Activated CD4-positive, alpha-beta memory T cell treated with anti-CD3 and anti-CD28 coated beads, Interleukin-2, amount 10 ng/mL, durations not matched to agents 7 days and 5 days (primary cell): ENCODE measurements at regions of chr21 and their contacts with region 1.

Region 1: DNA sequence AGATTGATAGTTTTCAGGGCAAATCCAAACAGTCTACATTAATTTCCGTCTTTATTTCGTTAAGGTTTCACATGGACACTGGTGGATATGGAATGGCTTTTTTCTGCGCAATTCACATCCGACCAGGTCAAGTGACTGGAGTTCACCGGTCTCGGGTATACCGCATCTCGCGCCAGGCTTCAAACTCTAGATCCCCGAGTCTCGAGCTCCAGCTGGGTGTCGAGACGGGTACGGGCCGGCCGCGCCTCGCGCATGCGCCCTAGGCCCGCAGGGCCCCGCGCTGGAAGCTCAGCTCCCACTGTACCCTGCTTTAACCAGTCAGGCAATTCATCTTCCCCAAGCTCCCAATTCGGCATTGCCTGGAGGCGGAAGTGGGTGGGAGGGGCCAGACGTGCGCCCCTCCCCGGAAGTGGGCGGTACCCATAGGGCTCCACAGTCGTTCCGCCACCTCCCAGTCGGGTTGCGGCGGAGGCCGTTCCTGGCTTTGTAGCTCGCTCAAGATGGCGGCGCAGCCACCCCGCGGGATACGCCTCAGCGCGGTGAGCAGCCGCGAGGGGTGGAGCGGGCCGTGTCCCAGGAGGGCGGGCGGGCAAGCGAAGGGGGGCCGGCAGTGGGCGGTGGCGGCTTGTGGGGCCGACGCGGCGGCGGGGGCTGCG is at the start of gene MORC3:
- DNase-seq: peak; percentile 99
- H3K4me3 Mint-ChIP-seq: peak within 1 kb of the TSS; percentile 88
- H3K27ac Mint-ChIP-seq: peak within 1 kb of the TSS; percentile 96
- H3K4me1 Mint-ChIP-seq: peaks cover 26% of the 10 kb centered on the region
- H3K27me3 Mint-ChIP-seq: peaks cover 3% of the 10 kb centered on the region
- total RNA-seq, gene MORC3: 43.6 to 44.3 TPM

Region 2: GRCh38 chr21:35811191-35811806 is 508.6 kb before region 1 on chr21:
- CTCF ChIA-PET with region 1: no interaction called
- POLR2A ChIA-PET with region 1: no interaction called
- DNase-seq: no peak
- H3K4me3 Mint-ChIP-seq: no peak overlapping the region
- H3K27ac Mint-ChIP-seq: no peak overlapping the region
- H3K4me1 Mint-ChIP-seq: no peaks in the 10 kb centered on the region
- H3K27me3 Mint-ChIP-seq: peaks cover 9% of the 10 kb centered on the region

Region 3: DNA sequence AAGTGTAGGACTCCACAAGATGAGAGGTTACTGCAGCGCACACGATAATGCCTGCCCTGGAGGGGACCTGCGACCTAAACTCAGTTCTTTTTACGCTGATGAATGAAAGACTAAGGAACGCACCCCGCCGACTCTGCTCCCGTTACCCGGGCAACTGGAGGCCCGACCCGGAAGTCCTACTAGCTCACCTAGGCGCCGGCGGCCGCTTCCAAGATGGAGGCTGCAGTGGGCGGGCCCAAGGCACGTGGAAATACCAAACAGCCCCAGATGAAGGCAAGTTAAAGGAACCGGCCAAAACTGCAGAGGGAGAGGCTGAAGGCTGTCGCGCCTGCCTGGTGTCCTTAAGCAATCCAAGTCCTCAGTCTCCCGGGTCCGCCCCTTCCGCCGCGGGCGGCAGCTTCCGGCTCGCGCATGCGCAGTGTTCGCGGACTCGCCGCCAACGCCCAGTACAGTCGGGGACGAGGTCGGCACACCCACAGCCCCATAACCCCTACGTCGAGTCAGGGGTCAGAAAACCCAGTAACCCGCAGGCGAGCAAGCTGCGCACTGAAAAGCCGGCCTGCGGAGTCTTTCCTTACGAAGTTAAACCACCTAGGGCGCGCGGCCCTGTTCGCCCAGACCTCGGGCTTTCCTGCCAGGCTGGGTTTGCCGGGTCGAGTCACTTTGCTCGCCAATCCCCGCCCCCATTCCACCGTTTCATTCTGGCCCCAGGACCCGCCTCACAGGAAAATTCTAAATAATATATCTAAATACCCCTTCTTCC is 259.6 kb before region 1 on chr21 and contains the start of gene SETD4:
- CTCF ChIA-PET with region 1: no interaction called
- POLR2A ChIA-PET with region 1: interaction called, 11 read pairs
- DNase-seq: peak; percentile 90
- H3K4me3 Mint-ChIP-seq: peak within 1 kb of the TSS; percentile 96
- H3K27ac Mint-ChIP-seq: peak within 1 kb of the TSS; percentile 98
- H3K4me1 Mint-ChIP-seq: peaks cover 35% of the 10 kb centered on the region
- H3K27me3 Mint-ChIP-seq: peaks cover 2% of the 10 kb centered on the region
- total RNA-seq, gene SETD4: 15.5 to 17.4 TPM

Region 4: DNA sequence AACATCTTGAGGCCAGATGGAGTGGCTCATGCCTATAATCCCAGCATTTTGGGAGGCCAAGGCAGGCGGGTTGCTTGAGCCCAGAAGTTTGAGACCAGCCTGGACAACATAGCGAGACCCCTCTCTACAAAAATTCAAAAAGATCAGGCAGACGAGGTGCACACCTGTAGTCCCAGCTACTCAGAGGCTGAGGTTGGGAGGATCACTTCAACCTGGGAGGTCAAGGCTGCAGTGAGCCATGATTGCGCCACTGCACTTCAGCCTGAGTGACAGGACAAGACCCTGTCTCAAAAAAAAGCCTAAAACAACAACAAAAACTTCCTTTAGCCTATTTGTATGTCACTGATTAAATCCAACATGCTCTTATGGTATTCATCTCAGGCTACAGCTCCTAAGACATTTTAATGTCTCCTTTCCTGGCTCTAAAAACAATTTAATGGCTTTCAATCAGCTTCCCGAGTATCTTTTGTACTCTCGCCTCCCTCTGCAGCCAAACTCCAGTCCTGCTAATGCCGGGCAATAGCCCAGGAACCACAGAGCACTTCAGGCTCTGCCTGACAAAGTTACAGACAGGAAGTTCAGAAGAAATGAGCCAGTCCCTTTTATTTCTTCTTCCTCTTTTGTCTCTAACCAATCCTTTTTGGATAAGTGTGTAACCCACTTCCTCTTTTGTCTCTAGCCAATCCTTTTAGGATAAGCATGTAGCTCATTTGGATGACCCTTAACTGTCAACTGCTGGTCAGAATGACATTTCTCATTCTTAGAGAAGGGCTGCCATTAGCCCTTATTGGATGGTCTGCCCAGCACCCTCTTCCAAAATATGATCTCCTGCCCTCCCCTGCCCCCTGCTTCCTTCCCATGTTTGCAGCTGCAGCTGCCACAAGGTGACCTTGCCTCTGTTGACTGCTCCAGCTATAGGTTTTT is 169.8 kb before region 1 on chr21:
- CTCF ChIA-PET with region 1: interaction called, 5 read pairs
- POLR2A ChIA-PET with region 1: interaction called, 16 read pairs
- DNase-seq: no peak
- H3K4me3 Mint-ChIP-seq: no peak overlapping the region
- H3K27ac Mint-ChIP-seq: peak overlapping the region; percentile 74
- H3K4me1 Mint-ChIP-seq: peaks cover 51% of the 10 kb centered on the region
- H3K27me3 Mint-ChIP-seq: peaks cover 5% of the 10 kb centered on the region

Region 5: DNA sequence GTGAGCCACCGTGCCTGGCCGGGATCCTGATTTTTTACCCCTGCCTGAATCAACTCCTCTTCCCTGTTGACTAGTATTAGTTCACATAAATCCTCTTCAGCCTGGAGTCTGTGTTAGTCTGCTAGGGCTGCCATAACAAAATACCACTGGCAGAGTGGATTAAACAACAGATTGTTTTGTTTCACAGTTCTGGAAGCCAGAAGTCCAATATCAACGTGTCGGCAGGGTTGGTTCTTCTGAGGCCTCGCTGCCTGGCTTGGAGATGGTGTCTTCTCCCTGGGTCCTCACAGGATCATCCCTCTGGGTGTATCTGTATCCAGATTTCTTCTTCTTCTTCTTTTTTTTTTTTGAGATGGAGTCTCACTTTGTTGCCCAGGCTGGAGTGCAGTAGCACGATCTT is 145.1 kb before region 1 on chr21:
- CTCF ChIA-PET with region 1: interaction called, 18 read pairs
- POLR2A ChIA-PET with region 1: interaction called, 19 read pairs
- DNase-seq: no peak
- H3K4me3 Mint-ChIP-seq: no peak overlapping the region
- H3K27ac Mint-ChIP-seq: peak overlapping the region; percentile 93
- H3K4me1 Mint-ChIP-seq: peaks cover 36% of the 10 kb centered on the region
- H3K27me3 Mint-ChIP-seq: no peaks in the 10 kb centered on the region

Region 6: DNA sequence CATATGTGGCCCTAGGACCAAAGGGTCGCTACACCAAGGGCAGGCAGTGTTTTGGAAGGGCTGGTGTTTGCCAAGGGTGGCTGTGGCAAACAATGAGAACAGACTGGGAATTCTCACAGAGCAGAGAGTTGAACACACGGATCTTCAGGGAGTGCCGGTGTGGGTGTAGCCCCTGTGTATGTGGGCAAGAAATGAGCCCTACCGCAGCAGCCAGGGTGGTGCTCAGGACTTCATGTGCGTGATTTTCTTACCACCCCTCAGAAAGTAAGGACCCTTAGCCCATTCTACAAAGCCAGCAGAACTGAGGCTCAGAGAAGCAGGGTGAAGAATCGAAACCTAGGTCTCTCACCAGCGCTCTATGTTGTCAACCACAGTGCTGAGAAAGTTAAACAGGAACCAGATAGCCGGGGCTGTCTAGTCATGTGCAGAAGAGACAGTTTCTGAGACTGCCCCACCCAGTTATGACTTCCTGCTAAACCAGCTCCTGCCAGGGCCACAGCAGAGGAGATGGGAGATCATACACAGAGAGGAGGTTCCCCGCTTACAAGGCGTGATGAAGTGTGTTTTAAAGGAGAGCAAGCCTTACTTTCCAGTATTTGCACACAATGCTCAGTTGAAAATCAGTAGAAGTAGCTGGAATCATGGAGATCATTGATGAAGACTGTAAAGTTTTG is 21.8 kb before region 1 on chr21:
- CTCF ChIA-PET with region 1: interaction called, 36 read pairs
- POLR2A ChIA-PET with region 1: interaction called, 237 read pairs
- DNase-seq: peak; percentile 83
- H3K4me3 Mint-ChIP-seq: peak overlapping the region; percentile 76
- H3K27ac Mint-ChIP-seq: peak overlapping the region; percentile 93
- H3K4me1 Mint-ChIP-seq: peaks cover 50% of the 10 kb centered on the region
- H3K27me3 Mint-ChIP-seq: no peaks in the 10 kb centered on the region

Region 7: DNA sequence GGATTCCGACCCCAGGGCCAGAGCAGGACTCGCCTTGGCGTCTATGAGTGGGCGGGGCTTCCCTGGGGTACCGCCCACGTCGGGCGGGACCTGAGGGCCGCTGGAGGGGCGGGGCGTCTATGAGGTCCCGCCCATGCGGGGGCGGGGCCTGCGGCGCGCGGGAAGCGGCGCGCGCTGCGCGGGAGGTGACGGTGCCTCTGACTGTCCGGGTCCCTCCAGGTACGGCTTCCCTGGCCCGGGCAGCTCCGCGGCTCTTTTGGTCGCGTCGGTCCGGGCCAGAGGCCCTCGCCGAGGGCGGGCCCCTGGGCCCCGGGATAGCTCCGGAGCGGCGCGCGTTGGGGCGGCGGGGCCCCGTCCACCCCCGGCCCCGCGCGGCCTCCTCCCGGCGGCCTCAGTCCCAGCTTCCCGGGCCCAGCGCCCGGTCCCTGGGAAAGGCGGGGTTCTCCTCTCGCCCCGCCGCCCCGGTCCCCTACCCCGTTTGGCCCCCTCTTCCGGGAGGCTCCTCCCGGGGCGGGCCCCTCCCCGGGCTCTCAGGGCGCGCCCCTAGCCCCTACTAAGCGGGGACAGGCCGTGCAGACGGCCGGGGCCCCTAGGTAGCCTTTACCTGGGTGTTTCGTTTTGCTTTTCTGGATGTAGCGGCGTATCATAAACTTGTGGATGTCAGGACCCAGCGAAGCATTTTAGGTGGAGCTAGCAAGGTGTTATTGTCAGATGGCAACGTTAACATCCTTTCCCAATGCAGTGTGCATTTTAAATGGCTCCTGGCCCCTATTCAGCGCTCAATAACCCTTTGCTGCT is 65.5 kb after region 1 on chr21 and contains the start of gene CHAF1B:
- CTCF ChIA-PET with region 1: interaction called, 3 read pairs
- POLR2A ChIA-PET with region 1: interaction called, 37 read pairs
- DNase-seq: peak; percentile 85
- H3K4me3 Mint-ChIP-seq: peak within 1 kb of the TSS; percentile 83
- H3K27ac Mint-ChIP-seq: peak within 1 kb of the TSS; percentile 83
- H3K4me1 Mint-ChIP-seq: peaks cover 27% of the 10 kb centered on the region
- H3K27me3 Mint-ChIP-seq: no peaks in the 10 kb centered on the region
- total RNA-seq, gene CHAF1B: 18.8 to 23.9 TPM

Region 8: GRCh38 chr21:36524477-36524876 is 204.6 kb after region 1 on chr21:
- CTCF ChIA-PET with region 1: no interaction called
- POLR2A ChIA-PET with region 1: no interaction called
- DNase-seq: no peak
- H3K4me3 Mint-ChIP-seq: no peak overlapping the region
- H3K27ac Mint-ChIP-seq: no peak overlapping the region
- H3K4me1 Mint-ChIP-seq: no peaks in the 10 kb centered on the region
- H3K27me3 Mint-ChIP-seq: peaks cover 3% of the 10 kb centered on the region